CD8-positive, alpha-beta T cell (primary cell): ENCODE measurements at regions of chr14 and their contacts with region 1.

Region 1: DNA sequence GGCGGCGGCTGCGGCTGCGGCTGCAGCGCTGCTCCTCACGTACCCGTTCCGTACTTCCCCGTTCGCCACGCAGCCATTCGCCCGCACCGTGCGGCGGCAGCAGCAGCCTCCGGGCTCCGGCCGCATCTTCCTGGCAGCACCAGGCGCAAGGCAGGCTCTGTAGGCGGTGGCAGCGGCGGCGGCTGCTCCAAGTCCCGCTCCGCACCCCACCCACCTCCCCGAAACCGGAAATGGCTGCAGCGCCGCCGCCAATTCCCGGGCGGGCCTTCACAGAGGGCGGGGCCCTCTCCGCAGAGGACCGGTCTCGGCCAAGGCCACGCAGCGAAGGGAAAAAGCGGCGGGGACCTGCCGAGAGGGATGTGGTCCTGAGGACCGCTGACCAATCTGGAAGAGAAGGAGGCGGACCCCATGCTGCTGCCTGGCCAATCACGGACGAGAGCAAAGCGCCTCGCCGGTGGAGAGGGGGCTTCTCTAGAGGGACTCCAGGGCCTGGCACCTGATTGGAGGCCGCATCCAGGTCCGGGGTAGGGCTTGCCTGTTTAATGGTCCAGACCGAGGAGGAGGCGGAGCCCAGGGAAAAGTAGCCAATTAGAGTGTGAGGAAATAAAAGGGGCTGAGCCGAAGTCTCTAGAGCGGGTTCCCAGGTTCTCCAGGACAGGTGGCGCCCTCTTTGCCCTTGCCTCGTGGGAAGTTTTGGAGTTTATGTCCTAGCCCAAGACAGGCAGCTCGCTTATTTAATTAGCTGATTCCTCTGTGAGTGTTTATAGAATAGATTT is at the start of gene SPTLC2:
- DNase-seq: peak; percentile 92 to 99 (median 97)
- ATAC-seq: peak; percentile 96
- H3K4me3 ChIP-seq: peak within 1 kb of the TSS; percentile 75
- H3K4me3 Mint-ChIP-seq: peak within 1 kb of the TSS; percentile 90
- H3K27ac ChIP-seq: peak within 1 kb of the TSS; percentile 58 to 69
- H3K27ac Mint-ChIP-seq: peak within 1 kb of the TSS; percentile 87
- H3K4me1 ChIP-seq: peaks cover 12% of the 10 kb centered on the region
- H3K4me1 Mint-ChIP-seq: peaks cover 40% of the 10 kb centered on the region
- H3K27me3 ChIP-seq: no peaks in the 10 kb centered on the region
- H3K27me3 Mint-ChIP-seq: no peaks in the 10 kb centered on the region
- CTCF ChIP-seq: no peak
- total RNA-seq, gene SPTLC2: 14.4 to 15.8 TPM

Region 2: GRCh38 chr14:77033622-77034521 is 582.8 kb before region 1 on chr14:
- CTCF ChIA-PET with region 1: no interaction called
- POLR2A ChIA-PET with region 1: no interaction called
- intact Hi-C with region 1: loop called in 1 of 2 experiments (anchors 10 kb)
- DNase-seq: peak; percentile 54 to 94 (median 70)
- ATAC-seq: peak; percentile 34
- H3K4me3 ChIP-seq: peak overlapping the region; percentile 40 to 70
- H3K4me3 Mint-ChIP-seq: peak overlapping the region; percentile 86
- H3K27ac ChIP-seq: peak overlapping the region; percentile 67 to 99
- H3K27ac Mint-ChIP-seq: peak overlapping the region; percentile 95
- H3K4me1 ChIP-seq: peaks cover 69% of the 10 kb centered on the region
- H3K4me1 Mint-ChIP-seq: peaks cover 76% of the 10 kb centered on the region
- H3K27me3 ChIP-seq: no peaks in the 10 kb centered on the region
- H3K27me3 Mint-ChIP-seq: no peaks in the 10 kb centered on the region
- CTCF ChIP-seq: no peak

Region 3: DNA sequence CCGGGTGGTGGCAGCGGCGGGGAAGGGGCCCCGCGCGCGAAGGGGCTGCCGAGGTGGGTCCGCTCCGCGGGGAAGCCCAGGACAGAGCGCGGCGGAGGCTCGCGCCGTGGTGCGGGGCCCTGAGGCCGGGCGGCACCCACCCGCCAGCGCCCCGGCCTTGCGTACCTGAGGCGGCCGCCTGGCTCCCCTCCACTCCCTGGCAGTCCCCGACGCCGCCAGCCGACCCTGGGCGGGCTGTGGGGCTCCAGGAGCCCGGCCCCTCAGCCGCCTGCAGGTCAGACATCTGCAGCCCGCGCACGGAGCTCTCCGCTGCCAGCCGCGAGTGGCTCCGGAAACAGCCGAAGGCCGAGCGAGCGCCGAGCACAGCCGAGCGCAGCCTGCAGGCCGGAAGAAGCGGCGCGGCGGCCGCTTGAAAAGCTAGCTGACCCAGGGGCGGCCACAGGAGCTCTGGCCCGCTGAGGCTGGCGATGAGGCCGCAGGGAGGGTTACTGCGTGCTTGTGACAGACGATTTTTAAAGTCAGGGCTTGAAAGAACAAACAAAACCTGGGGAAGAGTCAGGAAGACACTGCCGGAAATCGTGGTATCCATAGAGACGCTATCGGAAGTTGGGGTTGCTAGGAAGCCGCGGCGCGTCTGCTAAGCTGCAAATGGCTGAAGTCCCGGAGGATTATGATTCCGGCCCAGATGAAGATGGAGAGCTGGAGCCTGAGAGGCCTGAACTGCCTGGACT is 239.7 kb before region 1 on chr14 and contains the starts of genes SAMD15 and TMED8:
- CTCF ChIA-PET with region 1: no interaction called
- POLR2A ChIA-PET with region 1: no interaction called
- intact Hi-C with region 1: loop called in 1 of 2 experiments (anchors 1 kb)
- DNase-seq: peak; percentile 69 to 92 (median 82)
- ATAC-seq: peak; percentile 95
- H3K4me3 ChIP-seq: peak within 1 kb of the TSS; percentile 74 to 96
- H3K4me3 Mint-ChIP-seq: peak within 1 kb of the TSS; percentile 89
- H3K27ac ChIP-seq: peak within 1 kb of the TSS; percentile 62 to 91
- H3K27ac Mint-ChIP-seq: peak within 1 kb of the TSS; percentile 87
- H3K4me1 ChIP-seq: peaks cover 17% of the 10 kb centered on the region
- H3K4me1 Mint-ChIP-seq: peaks cover 38% of the 10 kb centered on the region
- H3K27me3 ChIP-seq: no peaks in the 10 kb centered on the region
- H3K27me3 Mint-ChIP-seq: no peaks in the 10 kb centered on the region
- CTCF ChIP-seq: no peak
- total RNA-seq, gene SAMD15: 0.50 to 0.52 TPM
- total RNA-seq, gene TMED8: 4.3 to 4.6 TPM

Region 4: GRCh38 chr14:77580964-77581505 is 35.6 kb before region 1 on chr14:
- CTCF ChIA-PET with region 1: no interaction called
- POLR2A ChIA-PET with region 1: no interaction called
- intact Hi-C with region 1: loop called in 1 of 2 experiments (anchors 5 kb)
- DNase-seq: peak in 2 of 9 experiments; percentile 47 to 71
- ATAC-seq: peak; percentile 84
- H3K4me3 ChIP-seq: peak overlapping the region; percentile 20 to 23
- H3K4me3 Mint-ChIP-seq: peak overlapping the region; percentile 67
- H3K27ac ChIP-seq: peak overlapping the region; percentile 6 to 79
- H3K27ac Mint-ChIP-seq: peak overlapping the region; percentile 77
- H3K4me1 ChIP-seq: peaks cover 17% of the 10 kb centered on the region
- H3K4me1 Mint-ChIP-seq: peaks cover 44% of the 10 kb centered on the region
- H3K27me3 ChIP-seq: no peaks in the 10 kb centered on the region
- H3K27me3 Mint-ChIP-seq: no peaks in the 10 kb centered on the region
- CTCF ChIP-seq: no peak

Region 5: DNA sequence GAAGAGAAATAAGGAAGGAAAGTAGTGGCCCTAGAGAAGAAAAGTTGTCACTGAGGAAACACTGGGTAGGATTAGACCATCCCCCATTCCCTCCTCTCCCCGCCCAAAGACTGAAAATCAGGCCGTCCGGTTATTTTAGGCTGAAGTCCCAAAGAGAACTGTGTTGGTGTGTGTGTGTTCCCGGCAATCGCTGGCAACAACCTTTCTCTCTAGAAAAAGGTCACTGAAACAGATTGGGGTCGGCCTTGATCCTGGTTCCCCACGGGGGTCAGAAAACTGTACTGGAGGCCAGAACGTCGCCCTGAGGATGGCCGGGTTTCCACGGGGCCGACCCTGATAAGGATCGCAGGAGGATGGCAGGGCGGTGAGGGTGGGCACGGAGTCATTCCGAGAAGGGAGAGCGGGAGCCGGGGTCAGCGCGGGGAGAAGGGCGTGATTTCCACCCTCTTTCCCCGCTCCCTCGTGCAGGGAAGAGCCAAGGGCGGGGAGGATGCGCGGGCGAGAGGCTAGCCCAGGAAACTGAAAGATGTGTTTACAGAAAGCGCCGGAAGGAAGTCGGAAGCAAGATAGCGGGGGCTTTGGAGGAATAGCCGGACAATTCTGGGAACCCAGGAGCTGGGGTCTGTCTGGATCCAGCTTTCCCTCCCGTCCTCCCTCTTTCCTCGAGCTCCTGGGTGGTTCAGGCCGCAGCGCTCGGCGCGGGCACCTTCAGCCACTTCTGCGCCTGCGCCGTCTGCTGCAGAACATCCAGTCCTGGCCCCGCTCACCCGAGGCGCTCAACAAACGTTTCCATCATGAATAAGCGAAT is 25.1 kb after region 1 on chr14:
- CTCF ChIA-PET with region 1: no interaction called
- POLR2A ChIA-PET with region 1: no interaction called
- intact Hi-C with region 1: loop called in 1 of 2 experiments (anchors 1 kb)
- DNase-seq: peak; percentile 27 to 82 (median 63)
- ATAC-seq: peak; percentile 83
- H3K4me3 ChIP-seq: peak overlapping the region; percentile 65 to 84
- H3K4me3 Mint-ChIP-seq: peak overlapping the region; percentile 94
- H3K27ac ChIP-seq: peak overlapping the region; percentile 75 to 85
- H3K27ac Mint-ChIP-seq: peak overlapping the region; percentile 97
- H3K4me1 ChIP-seq: peaks cover 11% of the 10 kb centered on the region
- H3K4me1 Mint-ChIP-seq: peaks cover 15% of the 10 kb centered on the region
- H3K27me3 ChIP-seq: no peaks in the 10 kb centered on the region
- H3K27me3 Mint-ChIP-seq: no peaks in the 10 kb centered on the region
- CTCF ChIP-seq: no peak

Region 6: GRCh38 chr14:77760381-77761246 is 144.0 kb after region 1 on chr14 and contains the start of gene SNW1:
- CTCF ChIA-PET with region 1: no interaction called
- POLR2A ChIA-PET with region 1: no interaction called
- intact Hi-C with region 1: loop called (anchors 1 to 2 kb)
- DNase-seq: peak; percentile 78 to 97 (median 89)
- ATAC-seq: peak; percentile 91
- H3K4me3 ChIP-seq: peak within 1 kb of the TSS; percentile 78 to 90
- H3K4me3 Mint-ChIP-seq: peak within 1 kb of the TSS; percentile 96
- H3K27ac ChIP-seq: peak within 1 kb of the TSS; percentile 97 to 99
- H3K27ac Mint-ChIP-seq: peak within 1 kb of the TSS; percentile 98
- H3K4me1 ChIP-seq: peaks cover 34% of the 10 kb centered on the region
- H3K4me1 Mint-ChIP-seq: peaks cover 50% of the 10 kb centered on the region
- H3K27me3 ChIP-seq: no peaks in the 10 kb centered on the region
- H3K27me3 Mint-ChIP-seq: no peaks in the 10 kb centered on the region
- CTCF ChIP-seq: no peak
- total RNA-seq, gene SNW1: 115 to 124 TPM

Region 7: GRCh38 chr14:78143489-78144145 is 527.0 kb after region 1 on chr14:
- CTCF ChIA-PET with region 1: no interaction called
- POLR2A ChIA-PET with region 1: no interaction called
- intact Hi-C with region 1: no loop called
- DNase-seq: no peak
- ATAC-seq: no peak
- H3K4me3 ChIP-seq: no peak overlapping the region
- H3K4me3 Mint-ChIP-seq: no peak overlapping the region
- H3K27ac ChIP-seq: no peak overlapping the region
- H3K27ac Mint-ChIP-seq: no peak overlapping the region
- H3K4me1 ChIP-seq: no peaks in the 10 kb centered on the region
- H3K4me1 Mint-ChIP-seq: no peaks in the 10 kb centered on the region
- H3K27me3 ChIP-seq: no peaks in the 10 kb centered on the region
- H3K27me3 Mint-ChIP-seq: peaks cover 4% of the 10 kb centered on the region
- CTCF ChIP-seq: no peak